Activated T-helper 2 cell treated with anti-CD3 and anti-CD28 coated beads, Interferon-gamma antibody, Interleukin-2, Interleukin-4, amounts not matched to agents 10 μg/mL and 5 μg/mL and 100 μg/mL, durations not matched to agents 14 hours and 24 hours and 36 hours (primary cell): ENCODE measurements at regions of chr9 and their contacts with region 1.

Region 1: GRCh38 chr9:76393963-76394679 is at the start of gene RFK:
- DNase-seq: peak; percentile 89
- H3K4me3 Mint-ChIP-seq: peak within 1 kb of the TSS; percentile 100
- H3K27ac Mint-ChIP-seq: peak within 1 kb of the TSS; percentile 100
- H3K4me1 Mint-ChIP-seq: peaks cover 26% of the 10 kb centered on the region
- H3K27me3 Mint-ChIP-seq: no peaks in the 10 kb centered on the region
- total RNA-seq, gene RFK: 14.9 and 17.1 TPM in 2 replicates

Region 2: DNA sequence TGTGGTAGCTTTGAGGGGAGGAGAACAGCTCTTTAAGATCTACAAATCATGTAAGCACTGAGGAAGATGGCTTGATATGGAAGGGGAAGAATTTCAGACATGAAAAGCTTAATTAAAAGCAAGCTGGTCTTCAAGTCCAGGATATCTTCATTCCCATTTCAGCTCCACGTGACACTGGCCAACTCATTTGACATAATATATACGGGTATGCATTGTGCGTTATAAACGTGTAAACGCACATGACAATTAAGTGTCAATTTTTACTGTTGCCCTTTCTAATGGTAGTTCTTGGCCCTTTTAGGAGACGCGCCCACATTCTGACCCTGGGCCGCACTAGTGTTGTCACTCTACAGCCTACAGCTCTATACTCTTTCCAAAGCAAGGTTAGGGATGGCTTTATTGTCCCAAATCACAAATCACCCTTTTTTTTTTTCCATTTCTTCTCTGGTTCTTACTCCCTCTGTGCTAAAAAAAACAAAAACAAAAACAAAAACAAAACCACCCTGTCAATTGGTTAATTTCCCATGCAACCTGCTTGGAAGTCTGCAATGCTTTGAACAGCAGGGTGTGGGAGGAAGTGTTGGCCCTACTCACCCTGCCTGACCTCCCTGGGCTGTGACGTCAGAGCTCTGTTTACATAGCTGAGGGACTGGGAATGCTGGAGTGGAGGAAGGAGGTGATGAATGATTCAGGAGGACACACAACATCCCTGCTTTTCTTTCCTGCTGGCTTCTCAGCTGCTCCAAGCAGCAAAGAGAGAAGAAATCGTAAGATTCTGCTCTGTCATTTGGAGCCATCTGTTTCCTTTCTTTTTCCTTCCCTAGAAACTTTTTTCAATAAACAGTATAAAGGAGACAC is 19.2 kb before region 1 on chr9:
- intact Hi-C with region 1: no loop called
- DNase-seq: no peak
- H3K4me3 Mint-ChIP-seq: no peak overlapping the region
- H3K27ac Mint-ChIP-seq: no peak overlapping the region
- H3K4me1 Mint-ChIP-seq: no peaks in the 10 kb centered on the region
- H3K27me3 Mint-ChIP-seq: peaks cover 3% of the 10 kb centered on the region

Region 3: DNA sequence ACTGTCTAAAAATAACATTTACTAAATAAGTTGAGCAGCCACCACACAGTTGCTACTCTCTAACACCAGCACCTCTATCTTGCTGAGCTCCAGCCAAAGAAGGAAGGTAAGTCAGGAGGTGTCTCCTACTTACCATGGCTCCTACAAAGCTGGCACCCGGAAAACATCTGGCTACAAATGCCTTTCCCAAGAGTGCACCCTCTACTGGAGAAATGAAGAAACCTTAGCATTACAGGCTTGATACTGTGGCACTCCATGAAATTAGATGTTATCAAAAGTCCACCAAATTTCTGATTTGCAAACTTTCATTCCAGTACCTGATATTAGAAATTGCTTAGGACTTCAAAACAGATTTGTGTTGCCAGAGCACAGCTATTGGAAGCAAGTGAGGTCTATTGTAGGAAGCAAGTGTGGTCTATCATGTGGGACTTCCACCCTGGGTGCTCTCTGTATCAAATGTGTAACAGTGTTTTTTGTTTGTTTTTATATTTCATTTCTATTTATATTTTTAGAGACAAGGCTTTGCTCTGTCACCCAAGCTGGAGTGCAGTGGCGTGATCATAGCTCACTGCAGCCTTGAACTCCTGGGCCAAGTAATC is 25.8 kb after region 1 on chr9:
- intact Hi-C with region 1: loop called (anchors 2 kb)
- DNase-seq: no peak
- H3K4me3 Mint-ChIP-seq: no peak overlapping the region
- H3K27ac Mint-ChIP-seq: no peak overlapping the region
- H3K4me1 Mint-ChIP-seq: peaks cover 40% of the 10 kb centered on the region
- H3K27me3 Mint-ChIP-seq: no peaks in the 10 kb centered on the region

Region 4: GRCh38 chr9:76458903-76459690 is 65.0 kb after region 1 on chr9 and contains the start of gene GCNT1:
- intact Hi-C with region 1: loop called (anchors 1 kb)
- DNase-seq: peak; percentile 91
- H3K4me3 Mint-ChIP-seq: peak within 1 kb of the TSS; percentile 95
- H3K27ac Mint-ChIP-seq: peak within 1 kb of the TSS; percentile 76
- H3K4me1 Mint-ChIP-seq: peaks cover 33% of the 10 kb centered on the region
- H3K27me3 Mint-ChIP-seq: no peaks in the 10 kb centered on the region
- total RNA-seq, gene GCNT1: 12.1 and 15.0 TPM in 2 replicates

Region 5: GRCh38 chr9:76704593-76705204 is 310.6 kb after region 1 on chr9:
- intact Hi-C with region 1: loop called (anchors 2 kb)
- DNase-seq: no peak
- H3K4me3 Mint-ChIP-seq: no peak overlapping the region
- H3K27ac Mint-ChIP-seq: no peak overlapping the region
- H3K4me1 Mint-ChIP-seq: peaks cover 7% of the 10 kb centered on the region
- H3K27me3 Mint-ChIP-seq: peaks cover 26% of the 10 kb centered on the region

Region 6: DNA sequence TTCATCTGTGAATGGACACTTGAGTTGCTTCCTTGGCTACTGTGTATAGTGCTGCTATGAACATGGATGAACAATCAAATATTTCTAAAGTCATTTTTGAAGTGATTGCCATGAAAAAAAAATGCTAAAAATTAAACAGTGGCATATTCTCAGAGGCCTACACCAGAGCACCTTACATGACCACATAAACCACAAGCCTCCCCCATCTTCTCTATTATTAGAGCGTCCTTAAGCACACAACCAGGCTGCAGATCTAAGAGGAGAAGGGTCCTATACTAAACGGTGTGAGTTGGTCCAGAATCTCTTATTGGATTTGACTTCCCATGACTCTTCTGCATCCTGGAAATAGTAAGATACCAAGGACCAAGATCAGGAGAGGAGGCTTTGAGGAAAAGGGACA is 404.4 kb after region 1 on chr9:
- intact Hi-C with region 1: no loop called
- DNase-seq: no peak
- H3K4me3 Mint-ChIP-seq: no peak overlapping the region
- H3K27ac Mint-ChIP-seq: no peak overlapping the region
- H3K4me1 Mint-ChIP-seq: peaks cover 2% of the 10 kb centered on the region
- H3K27me3 Mint-ChIP-seq: no peaks in the 10 kb centered on the region